Tibial artery (tissue), 4 donors: ENCODE measurements at regions of chr22 and their contacts with region 1.

Region 1: GRCh38 chr22:19629720-19630419 is 84.4 kb upstream of the SEPTIN5 start:
- DNase-seq: peak; percentile 71 to 78
- H3K4me3 ChIP-seq: no peak overlapping the region
- H3K27ac ChIP-seq: no peak overlapping the region
- H3K4me1 ChIP-seq: no peaks in the 10 kb centered on the region
- H3K27me3 ChIP-seq: peaks cover 0 to 52% of the 10 kb centered on the region in 2 donors
- CTCF ChIP-seq: peak; percentile 80 to 83

Region 2: GRCh38 chr22:19143967-19144400 is 485.9 kb before region 1 on chr22:
- intact Hi-C with region 1: loop called (anchors 5 kb)
- DNase-seq: no peak
- H3K4me3 ChIP-seq: peak overlapping the region; percentile 75 to 76
- H3K27ac ChIP-seq: peak overlapping the region; percentile 73 to 83
- H3K4me1 ChIP-seq: peaks cover 0 to 29% (median 15%) of the 10 kb centered on the region in 4 donors
- H3K27me3 ChIP-seq: peaks cover under 1 to 7% of the 10 kb centered on the region in 2 donors
- CTCF ChIP-seq: no peak

Region 3: DNA sequence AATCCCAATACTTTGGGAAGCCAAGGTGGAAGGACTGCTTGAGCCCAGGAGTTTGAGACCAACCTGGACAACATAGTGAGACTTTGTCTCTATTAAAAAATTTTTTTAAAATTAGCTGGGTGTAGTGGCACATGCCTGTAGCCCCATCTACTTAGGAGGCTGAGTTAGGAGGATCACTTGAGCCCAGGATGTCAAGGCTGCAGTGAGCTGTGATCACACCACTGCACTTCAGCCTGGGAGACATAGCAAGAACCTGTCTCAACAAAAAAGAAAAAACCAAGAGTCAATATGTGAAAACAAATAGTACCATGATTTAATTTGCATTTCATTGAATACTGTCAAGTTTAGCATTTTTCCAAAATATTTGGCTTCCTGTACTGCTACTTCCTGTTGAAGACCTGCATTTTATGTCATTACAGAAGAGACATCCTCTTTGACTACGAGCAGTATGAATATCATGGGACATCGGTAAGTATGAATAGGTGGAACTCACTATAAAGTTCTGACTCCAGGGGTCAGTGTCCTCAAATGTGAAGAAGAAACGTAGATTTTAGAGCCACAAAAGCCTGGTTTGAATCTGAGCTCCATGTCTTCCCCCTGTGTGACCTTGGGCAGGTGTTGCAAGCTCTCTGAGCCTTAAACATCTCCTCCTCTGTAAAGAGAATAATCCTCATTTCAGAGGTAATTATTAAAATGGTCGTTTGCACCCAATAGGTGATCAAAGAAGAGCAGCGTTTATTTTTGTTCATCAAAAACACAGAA is 134.1 kb before region 1 on chr22:
- intact Hi-C with region 1: loop called (anchors 10 kb)
- DNase-seq: no peak
- H3K4me3 ChIP-seq: no peak overlapping the region
- H3K27ac ChIP-seq: no peak overlapping the region
- H3K4me1 ChIP-seq: no peaks in the 10 kb centered on the region
- H3K27me3 ChIP-seq: no peaks in the 10 kb centered on the region
- CTCF ChIP-seq: no peak

Region 4: DNA sequence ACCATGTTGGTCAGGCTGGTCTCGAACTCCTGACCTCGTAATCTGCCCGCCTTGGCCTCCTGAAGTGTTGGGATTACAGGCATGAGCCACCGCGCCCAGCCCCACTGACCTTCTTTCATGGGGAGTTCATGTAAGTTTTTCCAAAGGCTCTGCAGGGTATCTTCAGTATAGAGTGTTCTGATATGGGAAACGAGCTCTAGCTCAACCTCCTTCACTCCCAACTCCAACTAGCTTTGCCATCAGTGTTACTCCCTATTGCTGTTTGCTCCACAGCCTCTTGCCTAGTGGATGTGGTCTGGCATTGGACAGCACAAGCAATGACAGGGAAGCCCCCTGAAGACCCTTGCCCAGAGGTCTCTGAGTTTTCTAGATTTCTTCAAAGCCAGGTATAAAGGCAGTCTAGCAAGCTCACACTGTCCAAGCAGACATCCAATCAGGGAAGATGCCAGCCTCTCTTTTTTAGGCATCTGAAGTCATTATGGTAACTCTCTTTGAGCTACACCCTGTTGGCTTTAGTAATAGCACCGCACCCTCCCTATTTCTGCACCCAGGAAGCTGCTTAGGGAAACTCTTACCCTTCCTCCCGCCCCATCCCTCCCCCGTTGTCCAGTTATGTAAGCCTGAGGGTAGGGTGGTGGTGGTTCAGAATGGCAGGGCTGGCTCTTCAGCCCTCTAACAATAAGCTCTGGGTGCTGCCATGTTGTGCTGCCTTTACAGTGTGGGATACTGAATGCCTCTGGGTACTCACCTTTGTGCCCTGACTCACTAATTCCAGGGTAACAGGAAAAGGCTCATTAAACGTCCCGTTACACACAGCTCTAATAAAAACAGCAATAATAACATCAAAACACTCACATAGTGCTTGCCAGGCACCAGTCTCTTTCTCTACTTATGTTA is 64.2 kb before region 1 on chr22:
- intact Hi-C with region 1: no loop called
- DNase-seq: peak in 1 of 2 donors; percentile 28
- H3K4me3 ChIP-seq: no peak overlapping the region
- H3K27ac ChIP-seq: no peak overlapping the region
- H3K4me1 ChIP-seq: no peaks in the 10 kb centered on the region
- H3K27me3 ChIP-seq: peaks cover 0 to 19% of the 10 kb centered on the region in 2 donors
- CTCF ChIP-seq: no peak

Region 5: GRCh38 chr22:19820628-19821522 is 191.0 kb after region 1 on chr22:
- intact Hi-C with region 1: no loop called
- DNase-seq: peak in 1 of 2 donors; percentile 62
- H3K4me3 ChIP-seq: no peak overlapping the region
- H3K27ac ChIP-seq: no peak overlapping the region
- H3K4me1 ChIP-seq: peaks cover 0 to 25% (median 0%) of the 10 kb centered on the region in 4 donors
- H3K27me3 ChIP-seq: no peaks in the 10 kb centered on the region
- CTCF ChIP-seq: no peak